Prostate gland (tissue), 2 donors: ENCODE measurements at regions of chr13 and their contacts with region 1.

Region 1: DNA sequence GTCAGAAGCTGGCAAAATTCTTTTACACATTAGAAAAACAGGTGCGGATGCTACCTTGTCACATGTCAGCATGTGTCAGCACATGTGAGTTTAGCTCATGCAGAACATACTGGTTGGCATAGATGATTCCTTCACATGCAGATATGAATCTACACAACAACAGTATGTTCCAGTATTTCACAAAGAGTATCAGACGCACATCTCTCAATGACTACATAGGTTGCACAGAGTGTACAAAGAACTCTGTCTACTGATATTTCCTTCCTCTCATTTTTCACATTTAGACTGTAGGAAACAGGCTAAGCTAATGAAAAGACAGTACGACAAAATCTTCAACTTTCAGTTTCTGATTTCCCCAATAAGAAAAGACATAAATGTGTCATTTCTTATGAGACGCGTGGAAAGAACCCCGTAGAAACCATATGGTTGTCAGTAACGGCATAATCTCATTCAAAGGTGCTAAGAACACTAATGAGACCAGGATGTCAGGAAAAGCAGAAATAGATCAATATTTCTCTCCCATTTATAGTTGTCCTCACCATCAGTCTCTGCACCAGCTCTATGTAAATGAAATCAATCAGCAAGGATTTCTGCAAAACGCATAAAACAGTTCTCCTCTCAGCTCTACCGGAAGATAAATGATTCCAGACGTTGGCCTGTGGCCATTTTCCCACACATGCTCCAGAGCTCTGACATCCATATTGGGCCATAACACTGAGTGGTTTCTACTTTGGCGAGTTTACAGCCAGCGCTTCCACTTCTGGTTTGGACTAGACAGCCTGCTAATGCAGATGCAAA is 81.2 kb downstream of the STARD13 start:
- DNase-seq: no peak
- H3K4me3 ChIP-seq: peak overlapping the region; percentile 4 to 10
- H3K27ac ChIP-seq: peak overlapping the region; percentile 55
- H3K4me1 ChIP-seq: no peaks in the 10 kb centered on the region
- H3K27me3 ChIP-seq: no peaks in the 10 kb centered on the region
- CTCF ChIP-seq: no peak
- POLR2A ChIP-seq: no peak

Region 2: GRCh38 chr13:32650705-32651311 is 553.5 kb before region 1 on chr13:
- intact Hi-C with region 1: no loop called
- DNase-seq: peak; percentile 23
- H3K4me3 ChIP-seq: no peak overlapping the region
- H3K27ac ChIP-seq: no peak overlapping the region
- H3K4me1 ChIP-seq: no peaks in the 10 kb centered on the region
- H3K27me3 ChIP-seq: no peaks in the 10 kb centered on the region
- CTCF ChIP-seq: peak in 3 of 4 experiments; percentile 44 to 55 (median 46)
- POLR2A ChIP-seq: no peak

Region 3: DNA sequence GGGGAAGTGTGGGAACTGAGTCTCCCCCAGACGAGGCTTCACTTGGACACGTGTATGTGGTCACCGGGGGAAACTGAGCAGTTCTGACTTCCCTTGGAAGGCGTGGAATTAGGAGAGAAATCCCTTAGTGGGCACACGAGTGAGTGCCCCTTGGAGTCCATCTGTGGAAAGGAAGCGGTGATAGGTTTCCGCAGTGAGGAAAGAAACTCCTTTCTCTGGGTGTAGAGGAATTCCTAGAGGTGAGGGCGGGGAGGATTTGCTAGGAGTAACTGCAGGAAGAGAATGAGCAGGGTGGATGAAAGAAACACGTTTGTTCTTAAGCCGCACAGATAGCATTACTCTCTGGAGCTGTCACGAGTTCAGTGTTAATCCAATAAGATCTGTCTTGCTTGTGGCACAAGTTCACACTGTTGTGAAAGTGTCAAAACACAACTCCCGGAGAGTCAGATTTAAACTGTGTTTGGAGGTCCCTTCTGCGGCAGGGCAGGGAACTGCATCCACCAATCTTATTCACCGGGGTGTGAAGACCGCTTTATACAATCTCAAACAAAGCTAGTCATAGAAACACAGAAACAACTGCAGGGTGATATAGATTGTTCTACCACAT is 186.9 kb before region 1 on chr13:
- intact Hi-C with region 1: loop called (anchors 10 kb)
- DNase-seq: no peak
- H3K4me3 ChIP-seq: peak overlapping the region; percentile 33 to 41
- H3K27ac ChIP-seq: peak overlapping the region; percentile 68 to 72
- H3K4me1 ChIP-seq: no peaks in the 10 kb centered on the region
- H3K27me3 ChIP-seq: no peaks in the 10 kb centered on the region
- CTCF ChIP-seq: peak in 2 of 4 experiments; percentile 39 to 45
- POLR2A ChIP-seq: no peak

Region 4: DNA sequence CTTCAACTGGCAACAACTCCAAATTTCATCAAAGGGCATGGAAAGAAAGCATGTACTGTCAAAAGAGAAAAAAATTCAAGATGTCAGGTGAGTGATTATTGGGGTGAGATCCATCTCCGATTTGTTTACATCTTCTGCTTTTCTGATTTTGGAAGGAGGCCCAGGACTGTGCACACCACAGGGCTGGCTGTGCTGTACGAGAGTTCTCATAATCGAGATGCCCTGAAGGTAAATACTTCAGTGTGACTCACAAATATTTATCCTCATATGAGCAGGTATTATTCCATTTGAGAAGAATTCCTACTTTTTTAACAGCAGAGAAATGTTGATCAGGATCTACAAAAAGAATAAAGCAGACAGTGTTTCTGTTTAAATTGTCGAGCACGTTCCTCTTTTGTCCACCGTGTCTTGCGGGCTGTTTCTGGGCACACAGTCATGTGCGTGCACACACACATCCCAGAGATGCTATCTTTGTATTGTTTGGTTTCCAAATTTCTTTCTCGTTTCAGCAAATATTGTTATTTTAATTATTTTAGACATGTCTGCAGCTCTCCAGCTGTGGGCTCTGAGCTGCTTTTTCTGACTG is 84.4 kb before region 1 on chr13:
- intact Hi-C with region 1: loop called (anchors 5 kb)
- DNase-seq: peak; percentile 50
- H3K4me3 ChIP-seq: no peak overlapping the region
- H3K27ac ChIP-seq: peak overlapping the region; percentile 48 to 56
- H3K4me1 ChIP-seq: no peaks in the 10 kb centered on the region
- H3K27me3 ChIP-seq: no peaks in the 10 kb centered on the region
- CTCF ChIP-seq: no peak
- POLR2A ChIP-seq: no peak

Region 5: DNA sequence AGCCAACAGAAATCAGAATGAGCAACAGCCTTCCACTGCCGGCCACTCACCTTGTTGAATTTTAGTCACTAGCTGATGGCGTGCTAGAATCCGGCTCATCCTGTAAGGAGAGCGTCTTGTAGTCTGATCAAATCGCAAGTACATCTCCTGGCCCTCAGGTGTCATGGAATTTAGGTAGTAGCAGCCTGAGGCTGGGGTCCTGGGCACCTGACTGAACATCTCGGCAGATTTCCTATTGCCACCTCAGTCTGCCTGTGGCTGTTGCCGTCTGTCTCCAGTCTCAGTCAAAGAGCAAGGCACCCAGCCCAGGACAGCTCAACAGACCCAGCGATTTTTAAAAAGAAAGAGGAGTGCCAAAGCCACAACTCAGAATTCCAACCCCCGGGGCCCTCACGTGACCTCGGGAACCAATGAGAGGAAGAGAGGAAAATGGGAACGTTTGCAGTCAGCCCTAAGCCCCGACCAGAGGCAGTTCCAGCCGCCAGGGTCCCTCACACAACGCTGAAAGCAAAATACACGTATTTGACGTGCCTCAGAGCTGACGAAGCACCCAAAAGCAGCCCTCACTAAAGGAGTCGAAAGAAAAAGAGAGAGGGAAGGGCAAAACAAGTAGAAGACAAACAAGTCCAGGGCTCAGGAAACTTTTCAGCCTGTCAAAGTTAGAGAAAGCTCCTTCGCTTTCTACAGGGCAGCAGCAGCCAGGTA is 81.2 kb after region 1 on chr13 and contains the start of gene STARD13:
- intact Hi-C with region 1: loop called (anchors 5 kb)
- DNase-seq: peak; percentile 94
- H3K4me3 ChIP-seq: peak within 1 kb of the TSS; percentile 52 to 60
- H3K27ac ChIP-seq: peak within 1 kb of the TSS; percentile 89 to 91
- H3K4me1 ChIP-seq: no peaks in the 10 kb centered on the region
- H3K27me3 ChIP-seq: no peaks in the 10 kb centered on the region
- CTCF ChIP-seq: peak in 3 of 4 experiments; percentile 16 to 72 (median 59)
- POLR2A ChIP-seq: peak; percentile 82
- total RNA-seq, gene STARD13: 27.4 to 31.1 TPM